ENCODE measurements at regions of chr9 and their contacts with region 1.

Region 1: DNA sequence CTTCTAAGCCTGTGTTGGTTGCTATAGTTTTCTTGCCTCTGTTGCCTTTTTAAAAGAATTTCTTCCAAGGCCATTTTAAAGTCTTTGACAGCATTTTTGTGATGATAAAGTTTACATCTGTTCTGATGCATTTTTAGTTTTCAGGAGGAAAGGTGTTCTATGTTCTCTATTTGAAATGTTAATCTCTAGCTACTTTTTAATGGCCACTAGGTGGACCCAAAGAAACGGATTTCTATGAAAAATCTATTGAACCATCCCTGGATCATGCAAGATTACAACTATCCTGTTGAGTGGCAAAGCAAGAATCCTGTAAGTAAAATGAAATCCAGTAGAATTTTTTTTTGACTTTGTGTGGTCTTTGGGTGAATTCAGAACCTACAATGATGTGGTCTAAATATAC is 60.2 kb downstream of the MELK start:
- DNase-seq: peak; percentile 23
- CTCF ChIP-seq: peak; percentile 66

Region 2: GRCh38 chr9:36738318-36738976 is 105.6 kb after region 1 on chr9:
- in situ Hi-C with region 1: loop called (anchors 10 kb)
- DNase-seq: no peak
- CTCF ChIP-seq: no peak

Measured in GM13977 (cell line).